ENCODE measurements at regions of chr14 and their contacts with region 1.

Region 1: GRCh38 chr14:105086833-105087307 is 21.6 kb upstream of the GPR132 start:
- DNase-seq: peak; percentile 91
- ATAC-seq: peak; percentile 69

Region 2: GRCh38 chr14:104976198-104977007 is 110.5 kb before region 1 on chr14:
- intact Hi-C with region 1: loop called (anchors 5 kb)
- DNase-seq: peak; percentile 91
- ATAC-seq: peak; percentile 77

Region 3: DNA sequence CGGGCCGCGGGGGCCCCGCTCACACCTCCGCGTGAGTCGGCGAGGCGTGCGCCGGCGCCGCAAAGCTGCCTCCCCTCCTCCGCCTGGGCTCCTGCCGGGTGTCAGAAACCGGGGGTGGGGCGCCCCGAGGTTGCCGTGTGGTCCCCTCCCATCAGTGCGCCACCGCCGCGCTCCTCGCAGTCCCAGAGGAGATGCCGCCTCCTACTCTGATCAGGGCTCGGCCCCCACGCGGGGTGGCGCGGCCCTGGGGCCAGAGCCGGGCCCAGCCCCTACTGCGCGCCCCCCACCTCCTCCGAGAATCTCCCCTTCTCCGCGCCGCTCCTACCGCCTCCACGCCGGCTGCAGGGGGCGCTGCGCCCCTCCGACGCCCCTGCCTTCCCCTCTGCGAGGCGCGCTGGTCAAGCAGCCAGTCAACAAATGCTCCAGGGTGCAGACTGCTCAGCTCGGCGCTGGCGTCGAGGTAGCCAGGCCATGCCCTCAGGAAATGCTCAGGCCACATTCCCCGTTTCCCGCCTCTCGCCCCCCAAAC is 82.2 kb after region 1 on chr14:
- intact Hi-C with region 1: loop called (anchors 2 kb)
- DNase-seq: no peak
- ATAC-seq: peak; percentile 11

Region 4: GRCh38 chr14:105255021-105255507 is 168.2 kb after region 1 on chr14:
- intact Hi-C with region 1: loop called (anchors 10 kb)
- DNase-seq: no peak
- ATAC-seq: peak; percentile 77

Region 5: DNA sequence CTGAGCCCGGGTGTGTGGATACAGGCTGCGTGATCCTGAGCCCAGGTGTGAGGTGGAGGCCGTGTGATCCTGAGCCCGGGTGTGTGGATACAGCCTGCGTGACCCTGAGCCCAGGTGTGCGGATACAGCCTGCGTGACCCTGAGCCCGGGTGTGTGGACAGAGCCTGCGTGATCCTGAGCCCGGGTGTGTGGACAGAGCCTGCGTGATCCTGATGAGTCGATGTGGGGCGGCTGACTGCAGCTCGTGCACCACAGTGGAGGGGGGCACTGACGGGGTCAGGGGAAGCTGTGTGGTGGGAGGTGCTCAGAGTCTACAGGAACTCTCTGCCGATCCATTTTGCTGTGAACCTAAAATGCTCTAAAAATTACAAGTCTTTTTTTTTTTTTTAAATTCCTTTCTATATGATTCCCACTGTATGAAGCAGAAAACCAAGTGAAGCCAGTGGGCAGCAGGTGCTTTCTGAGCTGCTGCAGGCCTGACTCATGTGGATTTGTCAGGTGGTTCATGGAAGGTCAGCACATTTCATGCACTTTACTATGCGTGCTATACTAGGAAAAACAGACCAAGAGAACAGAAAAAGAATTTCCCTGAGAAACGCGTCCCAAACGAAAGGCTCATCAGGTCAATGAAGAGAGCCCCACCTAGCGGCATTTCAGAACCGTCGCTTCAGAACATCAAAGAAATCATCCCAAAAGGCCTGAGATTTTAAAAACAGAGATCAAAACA is 194.7 kb after region 1 on chr14:
- intact Hi-C with region 1: loop called (anchors 10 kb)
- DNase-seq: no peak
- ATAC-seq: peak; percentile 47

Region 6: DNA sequence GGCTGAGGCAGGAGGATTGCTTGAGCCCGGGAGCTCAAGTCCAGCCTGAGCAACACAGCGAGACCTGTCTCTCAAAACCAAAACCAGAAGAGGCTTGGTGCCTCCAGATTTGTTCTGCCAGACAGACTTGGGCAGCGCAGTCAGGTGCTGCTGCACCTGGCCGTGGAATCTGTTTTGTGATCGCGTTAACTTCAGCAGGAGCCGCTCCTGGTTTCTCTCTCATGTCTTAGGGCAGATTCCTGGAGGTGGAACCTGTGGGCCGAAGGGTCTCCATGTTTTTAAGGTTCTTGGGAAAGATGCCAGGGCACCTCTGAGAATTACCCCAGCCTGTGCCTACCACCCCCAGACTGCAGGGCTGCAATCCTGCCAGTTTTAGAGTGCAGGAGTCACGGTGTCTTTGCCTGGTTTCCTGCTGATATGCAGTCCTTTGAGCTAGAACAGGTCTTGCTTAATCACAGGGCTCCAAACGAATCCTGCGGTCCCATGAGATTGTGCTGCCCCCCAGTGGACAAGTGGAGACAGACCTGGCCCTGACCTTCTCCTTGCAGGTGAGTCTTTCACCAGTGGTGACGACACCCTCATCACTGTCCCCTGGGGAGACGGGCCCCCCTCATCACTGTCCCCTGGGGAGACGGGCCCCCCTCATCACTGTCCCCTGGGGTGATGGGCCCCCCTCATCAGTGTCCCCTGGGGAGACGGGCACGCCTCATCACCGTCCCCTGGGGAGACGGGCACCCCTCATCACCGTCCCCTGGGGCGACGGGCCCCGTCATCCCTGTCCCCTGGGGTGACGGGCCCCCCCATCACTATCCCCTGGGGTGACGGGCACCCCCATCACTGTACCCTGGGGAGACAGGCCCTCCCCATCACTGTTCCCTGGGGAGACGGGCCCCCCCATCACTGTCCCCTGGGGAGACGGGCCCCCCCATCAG is 265.3 kb after region 1 on chr14:
- intact Hi-C with region 1: loop called (anchors 10 kb)
- DNase-seq: peak; percentile 82
- ATAC-seq: peak; percentile 92

Region 7: GRCh38 chr14:105389976-105390848 is 303.3 kb after region 1 on chr14:
- intact Hi-C with region 1: no loop called
- DNase-seq: peak; percentile 65
- ATAC-seq: peak; percentile 26